GM10248 (cell line): ENCODE measurements at regions of chr14 and their contacts with region 1.

Region 1: DNA sequence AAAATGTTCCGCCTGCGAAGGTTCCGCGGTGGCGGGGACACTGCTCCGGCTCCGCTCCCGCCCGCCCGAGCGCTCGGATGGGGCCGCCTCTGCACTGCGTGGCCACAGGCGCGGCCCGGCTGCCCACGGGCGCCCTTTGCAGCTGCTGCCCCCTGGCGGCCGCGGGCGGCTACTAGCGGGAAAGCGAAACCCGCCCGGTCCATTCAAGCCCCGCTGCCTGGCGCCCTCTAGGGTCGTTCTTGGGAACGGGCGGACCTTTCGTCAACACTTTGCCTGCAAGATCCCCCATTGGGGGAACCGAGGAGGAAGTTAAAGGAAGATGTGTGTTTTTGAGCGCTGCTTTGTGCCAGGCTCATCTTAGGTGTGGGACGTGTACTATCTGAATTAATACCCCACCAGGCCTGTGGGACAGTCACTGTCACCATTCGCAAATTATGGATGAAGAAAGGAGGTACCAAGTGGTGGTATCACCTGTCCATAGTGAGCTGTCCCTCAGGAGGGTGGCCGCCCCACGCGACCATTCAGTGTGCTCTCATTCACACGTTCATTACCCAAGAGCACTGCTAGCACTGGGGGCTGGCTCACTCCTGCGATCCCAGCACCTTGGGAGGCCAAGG is 19.4 kb downstream of the GPR132 start:
- DNase-seq: peak; percentile 94
- CTCF ChIP-seq: peak; percentile 100

Region 2: GRCh38 chr14:104932676-104933631 is 112.9 kb before region 1 on chr14:
- CTCF ChIA-PET with region 1: interaction called, 15 read pairs
- POLR2A ChIA-PET with region 1: no interaction called
- DNase-seq: peak; percentile 91
- CTCF ChIP-seq: peak; percentile 90

Region 3: GRCh38 chr14:104985675-104986525 is 59.9 kb before region 1 on chr14 and contains the start of gene CLBA1:
- CTCF ChIA-PET with region 1: interaction called, 54 read pairs
- POLR2A ChIA-PET with region 1: no interaction called
- DNase-seq: peak; percentile 100
- CTCF ChIP-seq: no peak

Region 4: DNA sequence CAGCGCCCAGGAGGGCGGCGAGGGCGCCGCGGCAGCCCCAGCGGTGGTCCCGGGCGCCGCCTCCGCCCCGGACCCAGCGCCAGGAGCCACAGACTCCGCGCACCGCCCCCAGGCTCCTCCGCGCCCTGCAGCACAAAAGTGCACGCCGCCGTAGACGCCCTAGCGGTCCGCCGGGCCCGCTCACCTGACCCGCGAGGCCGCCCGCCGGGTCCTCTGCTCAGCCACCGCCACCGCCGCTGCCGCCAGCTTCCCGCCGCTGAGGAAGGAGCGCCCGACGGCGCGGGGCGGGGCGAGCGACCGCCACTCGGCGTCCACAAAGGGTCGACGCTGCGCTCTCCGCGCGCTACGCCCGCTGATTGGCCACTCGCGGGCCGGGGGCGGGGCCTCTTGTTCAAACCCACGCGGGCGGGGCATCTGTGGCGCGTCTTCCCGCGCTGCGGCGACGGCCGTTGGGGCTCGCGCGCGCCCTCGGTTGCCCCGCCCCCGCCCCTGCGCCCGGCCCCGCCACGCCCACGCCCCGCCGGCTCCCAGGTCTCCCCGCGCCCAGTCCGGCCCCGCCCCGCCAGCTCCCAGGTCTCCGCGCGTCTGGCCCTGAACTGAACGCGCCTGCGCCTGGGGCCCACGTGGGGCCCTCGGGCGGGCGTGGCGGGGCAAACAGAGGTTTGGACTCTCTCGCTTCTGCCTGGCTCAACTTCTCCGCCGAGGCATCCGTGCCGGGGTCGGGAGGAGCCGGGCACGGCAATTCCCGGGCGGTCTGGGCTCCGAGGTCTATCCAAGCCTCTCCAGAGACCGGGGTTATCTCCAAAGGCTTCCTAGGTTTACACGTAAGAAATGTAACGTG is 24.8 kb before region 1 on chr14 and contains the start of gene CDCA4:
- CTCF ChIA-PET with region 1: interaction called, 37 read pairs
- POLR2A ChIA-PET with region 1: interaction called, 4 read pairs
- DNase-seq: peak; percentile 99
- CTCF ChIP-seq: no peak

Region 5: GRCh38 chr14:105034314-105035039 is 11.3 kb before region 1 on chr14:
- CTCF ChIA-PET with region 1: interaction called, 37 read pairs
- POLR2A ChIA-PET with region 1: interaction called, 7 read pairs
- DNase-seq: no peak
- CTCF ChIP-seq: no peak

Region 6: DNA sequence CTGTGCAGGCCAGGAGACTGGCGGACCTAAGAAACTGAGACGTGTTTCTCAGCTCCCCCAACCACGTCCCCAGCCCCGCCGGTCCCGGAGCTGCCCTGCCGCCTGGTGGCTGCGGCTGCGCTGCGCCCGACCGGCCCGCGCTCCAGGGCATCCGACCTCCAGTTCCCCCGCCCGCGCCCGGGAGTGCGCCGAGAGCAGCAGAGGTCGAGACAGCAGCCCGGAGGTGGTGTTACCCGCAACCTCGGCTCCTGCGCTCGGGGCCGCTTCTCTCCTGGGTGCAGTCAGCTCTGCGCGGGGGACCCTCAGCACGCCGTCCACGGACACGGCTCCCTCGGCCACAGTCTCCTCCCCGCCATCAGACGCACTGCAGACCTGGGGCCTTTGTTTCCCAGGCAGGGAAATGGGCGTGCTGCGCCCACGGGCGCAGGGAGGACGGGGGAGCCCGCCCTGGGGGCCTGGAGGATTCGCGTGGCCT is 41.1 kb after region 1 on chr14:
- CTCF ChIA-PET with region 1: interaction called, 24 read pairs
- POLR2A ChIA-PET with region 1: no interaction called
- DNase-seq: peak; percentile 87
- CTCF ChIP-seq: peak; percentile 93

Region 7: DNA sequence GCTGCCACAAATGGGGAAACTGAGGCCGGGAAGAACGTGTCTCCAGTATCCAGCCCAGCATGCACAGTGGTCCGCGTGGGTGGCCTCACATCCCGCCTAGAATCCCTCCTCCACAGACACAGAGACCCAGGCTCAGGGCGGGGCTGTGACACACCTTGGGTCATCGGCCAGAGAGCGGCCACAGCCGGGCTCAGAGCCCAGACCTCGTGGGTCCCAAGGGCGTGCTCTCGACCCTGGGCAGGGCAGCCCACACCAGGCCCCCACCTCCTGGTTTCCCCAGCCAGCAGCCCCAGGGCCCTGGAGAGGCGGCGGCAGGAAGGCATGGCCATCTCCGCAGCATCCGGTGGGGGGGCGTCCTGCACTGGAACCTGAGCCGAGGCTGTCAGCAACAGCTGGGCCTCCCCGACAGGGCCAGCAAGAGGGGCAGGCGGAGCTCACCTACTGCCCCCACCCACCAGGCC is 107.5 kb after region 1 on chr14:
- CTCF ChIA-PET with region 1: no interaction called
- POLR2A ChIA-PET with region 1: no interaction called
- DNase-seq: no peak
- CTCF ChIP-seq: no peak